ENCODE measurements at regions of chr5 and their contacts with region 1.

Region 1: GRCh38 chr5:54243473-54244080 is 66.8 kb downstream of the ARL15 start:
- DNase-seq: peak; percentile 77
- H3K4me3 Mint-ChIP-seq: no peak overlapping the region
- H3K27ac Mint-ChIP-seq: no peak overlapping the region
- H3K4me1 Mint-ChIP-seq: no peaks in the 10 kb centered on the region
- H3K27me3 Mint-ChIP-seq: peaks cover 5% of the 10 kb centered on the region

Region 2: DNA sequence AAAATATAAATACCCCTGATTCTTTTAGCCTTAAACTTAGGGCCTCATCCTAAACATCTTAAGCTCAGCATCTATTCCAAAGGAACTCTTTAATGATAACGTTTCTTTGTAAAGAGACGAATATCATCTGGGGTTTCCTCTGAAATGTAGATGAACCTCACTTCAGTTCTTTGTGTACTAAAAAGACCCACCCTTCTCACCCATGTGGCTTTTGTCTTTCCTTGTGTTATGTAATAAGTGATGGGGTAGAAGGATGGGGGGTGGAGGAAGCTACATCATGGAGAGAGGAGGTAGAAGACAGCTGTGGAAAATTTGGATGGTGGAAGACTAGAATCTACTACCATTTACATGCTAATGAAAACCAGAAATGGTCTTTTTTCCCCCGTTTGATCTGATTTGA is 572.1 kb before region 1 on chr5:
- intact Hi-C with region 1: no loop called
- DNase-seq: no peak
- H3K4me3 Mint-ChIP-seq: no peak overlapping the region
- H3K27ac Mint-ChIP-seq: no peak overlapping the region
- H3K4me1 Mint-ChIP-seq: no peaks in the 10 kb centered on the region
- H3K27me3 Mint-ChIP-seq: no peaks in the 10 kb centered on the region

Region 3: GRCh38 chr5:54415896-54416601 is 172.5 kb after region 1 on chr5:
- intact Hi-C with region 1: loop called (anchors 1 kb)
- DNase-seq: no peak
- H3K4me3 Mint-ChIP-seq: no peak overlapping the region
- H3K27ac Mint-ChIP-seq: no peak overlapping the region
- H3K4me1 Mint-ChIP-seq: no peaks in the 10 kb centered on the region
- H3K27me3 Mint-ChIP-seq: peaks cover 29% of the 10 kb centered on the region

Region 4: DNA sequence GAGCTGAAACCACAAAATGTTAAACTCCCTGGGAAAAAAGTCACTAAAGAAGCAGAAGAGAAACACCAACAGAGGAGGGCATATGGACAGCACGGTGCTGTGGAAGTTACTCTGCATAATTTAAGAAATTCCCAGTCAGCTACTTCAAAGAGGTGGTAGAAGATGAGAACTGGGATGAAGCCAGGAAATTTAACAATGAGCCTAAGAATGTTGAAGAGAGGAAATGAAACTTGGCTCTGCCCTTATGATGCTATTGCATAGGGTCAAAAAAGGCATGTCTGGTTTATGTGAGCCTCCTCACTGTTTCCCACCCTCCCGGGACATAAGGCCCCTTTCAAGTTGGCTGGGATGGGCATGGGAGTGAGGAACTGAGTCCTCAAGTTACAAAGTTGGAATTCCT is 248.6 kb after region 1 on chr5:
- intact Hi-C with region 1: loop called (anchors 1 kb)
- DNase-seq: no peak
- H3K4me3 Mint-ChIP-seq: no peak overlapping the region
- H3K27ac Mint-ChIP-seq: no peak overlapping the region
- H3K4me1 Mint-ChIP-seq: no peaks in the 10 kb centered on the region
- H3K27me3 Mint-ChIP-seq: peaks cover 14% of the 10 kb centered on the region